ENCODE measurements at regions of chr19 and their contacts with region 1.

Region 1: GRCh38 chr19:33292595-33293441 is 9.5 kb downstream of the CEBPA start:
- DNase-seq: no peak
- H3K4me3 ChIP-seq: no peak overlapping the region
- H3K27ac ChIP-seq: peak overlapping the region; percentile 53
- H3K4me1 ChIP-seq: peaks cover 38% of the 10 kb centered on the region
- H3K27me3 ChIP-seq: no peaks in the 10 kb centered on the region
- CTCF ChIP-seq: peak in 1 of 2 donors; percentile 6

Region 2: DNA sequence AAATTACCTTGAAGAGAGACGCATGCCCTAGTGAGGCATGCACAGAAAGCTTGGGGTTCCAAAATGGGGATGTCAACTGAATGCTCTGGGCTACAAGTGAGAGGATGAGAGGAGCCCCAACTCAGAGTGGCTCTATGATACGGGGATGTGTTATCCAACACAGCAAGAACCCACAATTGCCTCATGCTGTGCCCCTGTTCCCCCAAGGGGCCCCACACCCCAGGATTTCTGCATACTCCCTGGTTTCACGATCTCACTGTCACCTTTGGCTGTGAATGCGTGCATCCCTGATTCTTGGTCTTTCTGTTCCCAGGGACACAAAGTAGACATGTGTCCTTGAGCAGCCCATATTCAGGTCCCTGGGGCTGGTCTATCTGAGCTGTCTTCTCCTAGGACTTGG is 131.6 kb before region 1 on chr19:
- CTCF ChIA-PET with region 1: no interaction called
- dilution Hi-C with region 1: loop called (anchors 5 kb)
- in situ Hi-C with region 1: no loop called
- intact Hi-C with region 1: no loop called
- DNase-seq: no peak
- H3K4me3 ChIP-seq: no peak overlapping the region
- H3K27ac ChIP-seq: no peak overlapping the region
- H3K4me1 ChIP-seq: no peaks in the 10 kb centered on the region
- H3K27me3 ChIP-seq: no peaks in the 10 kb centered on the region
- CTCF ChIP-seq: no peak

Region 3: GRCh38 chr19:33350538-33351309 is 57.9 kb after region 1 on chr19:
- CTCF ChIA-PET with region 1: no interaction called
- dilution Hi-C with region 1: loop called (anchors 5 kb)
- in situ Hi-C with region 1: no loop called
- intact Hi-C with region 1: no loop called
- DNase-seq: peak; percentile 100
- H3K4me3 ChIP-seq: peak overlapping the region in 1 of 3 experiments; percentile 6
- H3K27ac ChIP-seq: peak overlapping the region; percentile 81
- H3K4me1 ChIP-seq: peaks cover 17% of the 10 kb centered on the region
- H3K27me3 ChIP-seq: no peaks in the 10 kb centered on the region
- CTCF ChIP-seq: no peak

Region 4: DNA sequence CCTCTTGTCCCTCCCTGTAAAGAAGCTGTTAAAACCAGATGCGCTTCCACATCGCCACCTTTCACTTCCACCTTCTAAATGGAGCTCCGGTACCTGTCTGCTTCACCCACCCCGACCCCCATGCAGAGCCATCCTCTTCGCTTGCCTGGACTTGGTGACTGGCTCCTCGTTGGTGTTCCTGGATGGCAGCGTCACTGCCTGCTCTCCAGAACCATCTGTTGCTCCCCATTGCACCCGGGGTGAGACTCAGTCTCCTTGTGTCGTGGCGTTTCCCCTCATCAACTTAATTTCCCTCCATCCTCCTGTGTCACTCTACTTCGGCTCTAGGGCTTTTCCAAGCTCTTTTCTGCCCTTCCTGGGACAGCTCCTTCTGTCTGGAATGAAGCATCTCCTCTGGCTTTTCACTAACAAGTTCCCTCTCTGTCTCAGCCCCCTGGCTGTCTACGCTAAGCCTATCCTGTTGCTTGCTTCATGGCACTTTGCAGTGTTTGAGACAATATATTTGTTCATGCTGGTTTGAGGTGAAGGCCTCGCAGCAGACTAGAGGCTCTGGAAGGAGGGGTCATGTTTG is 91.0 kb after region 1 on chr19:
- CTCF ChIA-PET with region 1: no interaction called
- dilution Hi-C with region 1: loop called (anchors 5 kb)
- in situ Hi-C with region 1: loop called in 1 of 2 experiments (anchors 10 kb)
- intact Hi-C with region 1: no loop called
- DNase-seq: no peak
- H3K4me3 ChIP-seq: no peak overlapping the region
- H3K27ac ChIP-seq: no peak overlapping the region
- H3K4me1 ChIP-seq: no peaks in the 10 kb centered on the region
- H3K27me3 ChIP-seq: no peaks in the 10 kb centered on the region
- CTCF ChIP-seq: no peak

Measured in mammary epithelial cell (primary cell).